GM12878 (cell line): ENCODE measurements at regions of chr2 and their contacts with region 1.

Region 1: DNA sequence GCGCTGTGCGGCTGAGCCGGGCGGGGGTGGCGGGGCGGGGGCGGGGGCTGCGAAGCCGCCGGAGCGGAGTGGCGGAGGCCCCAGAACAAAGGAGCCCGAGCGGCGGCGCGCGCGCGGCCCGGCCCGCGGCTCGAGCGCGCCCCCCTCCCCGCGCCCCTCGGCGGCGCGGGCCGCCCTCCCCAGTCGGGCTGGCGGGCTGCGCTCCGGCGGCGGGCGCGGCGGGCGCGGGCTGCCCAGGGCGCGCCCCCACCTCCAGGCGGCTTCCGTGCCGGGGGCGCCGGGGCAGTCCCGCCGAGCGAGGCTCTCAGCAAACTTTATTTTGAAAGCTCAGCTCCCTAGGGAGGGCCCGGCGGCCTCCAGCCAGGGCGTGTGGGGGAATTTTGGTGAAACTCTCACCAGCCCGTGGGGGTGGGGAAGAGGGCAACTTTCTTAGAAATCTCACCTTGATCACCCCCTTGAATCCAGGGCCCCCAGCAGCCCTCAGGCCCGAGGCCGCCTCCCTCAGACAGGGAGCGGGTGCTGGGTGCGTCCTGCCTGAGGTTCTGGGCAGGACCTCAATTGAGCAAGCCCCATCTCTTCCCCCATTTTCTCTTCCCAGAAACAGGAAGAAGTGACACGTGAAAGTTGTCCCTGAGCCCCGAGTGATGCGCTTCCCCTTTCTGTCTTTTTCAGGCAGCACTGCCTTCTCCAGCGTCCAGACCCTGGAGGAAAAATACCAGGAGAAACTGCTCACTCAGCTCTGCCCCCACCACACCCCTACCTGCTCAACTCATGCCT is 786 bp downstream of the TET3 start:
- DNase-seq: no peak
- ATAC-seq: peak; percentile 16
- H3K4me3 ChIP-seq: peak overlapping the region; percentile 96
- H3K27ac ChIP-seq: peak overlapping the region; percentile 89
- H3K4me1 ChIP-seq: peaks cover 12% of the 10 kb centered on the region
- H3K27me3 ChIP-seq: no peaks in the 10 kb centered on the region
- CTCF ChIP-seq: no peak
- EP300 ChIP-seq: peak; percentile 21 to 47; a peak in 1 of 4 replicates
- POLR2A ChIP-seq: no peak; the same call in 1 of the 2 replicates
- RAD21 ChIP-seq: no peak

Region 2: DNA sequence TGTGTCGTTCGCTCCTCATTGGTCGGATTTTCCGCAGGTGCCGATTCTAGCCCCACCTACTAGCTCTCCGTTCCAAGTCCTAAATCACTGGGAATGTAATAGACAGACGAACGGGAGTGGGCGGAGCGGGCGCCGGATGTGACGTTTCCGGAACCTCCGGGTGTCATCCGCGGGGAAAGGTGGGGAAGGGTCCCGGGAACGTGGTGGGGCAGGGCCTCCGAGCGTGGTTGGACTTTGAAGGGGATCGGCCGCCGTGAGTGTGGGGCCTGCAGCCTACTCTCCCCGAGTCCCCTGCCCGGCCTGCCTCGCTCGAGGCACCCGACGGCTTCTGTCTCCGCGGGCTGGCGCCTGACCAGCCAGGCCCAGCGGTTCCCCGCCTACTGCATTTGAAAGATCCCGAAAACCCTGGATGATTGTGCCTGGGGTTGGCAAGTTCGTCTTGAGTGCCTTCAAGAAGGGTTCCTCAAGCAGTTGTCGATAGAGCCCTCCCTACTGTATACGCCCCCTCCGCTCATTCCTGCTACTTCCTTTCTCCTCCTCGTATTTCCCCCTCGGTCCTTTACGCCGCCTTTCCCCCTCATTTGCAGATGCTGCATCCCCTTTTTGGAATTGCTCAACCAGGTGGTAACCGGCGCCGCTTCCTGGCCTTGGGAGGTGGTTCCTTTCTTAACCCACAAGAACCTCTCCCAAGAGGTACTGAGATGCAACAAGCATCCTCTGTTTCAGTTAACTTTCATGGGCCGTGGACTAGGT is 156.5 kb before region 1 on chr2 and contains the start of gene STAMBP:
- CTCF ChIA-PET with region 1: interaction called, 57 read pairs
- POLR2A ChIA-PET with region 1: interaction called, 6 read pairs
- RAD21 ChIA-PET with region 1: interaction called, 96 read pairs
- SMC1A ChIA-PET with region 1: interaction called, 46 read pairs
- in situ Hi-C with region 1: no loop called
- intact Hi-C with region 1: loop called (anchors 10 kb)
- DNase-seq: peak; percentile 87
- ATAC-seq: peak; percentile 89
- H3K4me3 ChIP-seq: peak within 1 kb of the TSS; percentile 96
- H3K27ac ChIP-seq: peak within 1 kb of the TSS; percentile 94
- H3K4me1 ChIP-seq: peaks cover 7% of the 10 kb centered on the region; the same call in 1 of the 2 replicates
- H3K27me3 ChIP-seq: no peaks in the 10 kb centered on the region
- CTCF ChIP-seq: no peak
- EP300 ChIP-seq: no peak
- POLR2A ChIP-seq: peak; percentile 80
- RAD21 ChIP-seq: no peak
- polyA plus RNA-seq, gene STAMBP: 67.3 to 72.2 TPM

Region 3: GRCh38 chr2:73920577-73921545 is 64.6 kb before region 1 on chr2:
- CTCF ChIA-PET with region 1: interaction called, 16 read pairs
- POLR2A ChIA-PET with region 1: no interaction called
- RAD21 ChIA-PET with region 1: interaction called, 9 read pairs
- SMC1A ChIA-PET with region 1: interaction called, 19 read pairs
- in situ Hi-C with region 1: no loop called
- intact Hi-C with region 1: loop called (anchors 2 kb)
- DNase-seq: no peak
- ATAC-seq: peak; percentile 76
- H3K4me3 ChIP-seq: no peak overlapping the region
- H3K27ac ChIP-seq: no peak overlapping the region
- H3K4me1 ChIP-seq: peaks cover 8% of the 10 kb centered on the region
- H3K27me3 ChIP-seq: no peaks in the 10 kb centered on the region
- CTCF ChIP-seq: peak; percentile 20 to 39 (median 33); a peak in 4 of 6 replicates
- EP300 ChIP-seq: no peak
- POLR2A ChIP-seq: no peak
- RAD21 ChIP-seq: peak; percentile 29; the same call in 1 of the 2 replicates

Region 4: DNA sequence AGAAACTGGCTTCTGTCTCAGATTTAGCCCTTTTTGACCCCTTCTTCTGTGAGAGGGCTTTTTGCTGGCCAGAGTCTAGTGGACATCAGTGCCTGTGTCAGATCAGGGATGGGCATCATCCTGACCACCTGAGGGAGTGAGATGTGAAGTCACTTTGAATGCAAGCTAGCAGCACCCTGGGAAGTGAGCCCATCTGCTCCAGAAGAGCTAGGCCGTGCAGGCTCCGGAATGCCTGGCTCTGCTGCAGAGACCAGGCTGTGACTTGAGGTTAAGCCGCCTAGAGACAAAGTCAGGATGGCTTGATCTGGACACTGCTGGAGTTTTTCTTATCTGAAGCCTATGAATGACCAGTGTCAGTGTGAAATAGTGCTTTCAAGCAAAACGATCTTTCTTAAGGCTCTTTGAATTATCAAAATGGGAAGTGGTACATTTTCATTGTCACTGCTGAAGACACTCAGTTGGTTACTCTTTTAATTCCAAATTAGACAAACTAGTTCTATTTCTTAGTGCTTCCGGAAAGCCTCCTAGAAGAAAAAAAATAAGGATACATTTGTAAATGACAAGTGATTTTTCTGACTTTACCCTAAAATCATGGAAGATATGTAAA is 38.0 kb before region 1 on chr2:
- CTCF ChIA-PET with region 1: no interaction called
- POLR2A ChIA-PET with region 1: interaction called, 4 read pairs
- RAD21 ChIA-PET with region 1: interaction called, 4 read pairs
- SMC1A ChIA-PET with region 1: interaction called, 15 read pairs
- in situ Hi-C with region 1: no loop called
- intact Hi-C with region 1: no loop called
- DNase-seq: no peak
- ATAC-seq: no peak
- H3K4me3 ChIP-seq: no peak overlapping the region
- H3K27ac ChIP-seq: no peak overlapping the region
- H3K4me1 ChIP-seq: peaks cover 4% of the 10 kb centered on the region; the same call in 1 of the 2 replicates
- H3K27me3 ChIP-seq: no peaks in the 10 kb centered on the region
- CTCF ChIP-seq: no peak
- EP300 ChIP-seq: no peak
- POLR2A ChIP-seq: no peak
- RAD21 ChIP-seq: no peak

Region 5: DNA sequence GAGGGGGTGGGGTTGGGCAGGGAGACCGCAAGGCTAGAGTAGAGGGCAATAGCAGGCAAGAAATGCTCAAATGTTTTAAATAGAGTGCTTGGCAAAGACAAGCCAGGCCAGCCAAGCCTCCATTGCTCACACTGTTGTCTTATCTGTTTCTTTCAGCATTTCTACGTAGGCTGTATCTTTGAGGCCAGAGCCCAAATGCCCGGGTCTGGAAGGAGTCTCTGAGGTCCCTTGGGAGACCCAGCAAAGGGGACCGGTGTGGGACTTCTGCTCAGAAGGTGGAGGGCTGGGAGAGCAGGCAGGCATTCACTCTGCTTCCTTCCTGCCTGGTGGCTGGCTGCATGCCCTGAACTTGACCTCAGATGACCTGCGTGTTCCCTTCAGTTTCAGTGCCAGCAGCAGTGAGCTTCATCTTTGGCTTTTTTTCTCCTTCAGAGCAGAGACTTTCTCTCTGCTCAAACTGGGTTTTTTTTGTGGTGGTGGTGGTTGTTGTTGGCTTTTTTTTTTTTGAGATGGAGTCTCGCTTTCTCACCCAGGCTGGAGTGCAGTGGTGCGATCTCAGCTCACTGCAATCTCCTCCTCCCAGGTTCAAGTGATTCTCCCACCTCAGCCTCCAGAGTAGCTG is 14.5 kb before region 1 on chr2:
- CTCF ChIA-PET with region 1: interaction called, 17 read pairs
- POLR2A ChIA-PET with region 1: interaction called, 25 read pairs
- RAD21 ChIA-PET with region 1: interaction called, 23 read pairs
- SMC1A ChIA-PET with region 1: interaction called, 31 read pairs
- in situ Hi-C with region 1: no loop called
- intact Hi-C with region 1: loop called (anchors 1 kb)
- DNase-seq: peak; percentile 88
- ATAC-seq: peak; percentile 84
- H3K4me3 ChIP-seq: peak overlapping the region; percentile 51; the same call in 1 of the 2 replicates
- H3K27ac ChIP-seq: peak overlapping the region; percentile 92
- H3K4me1 ChIP-seq: peaks cover 38% of the 10 kb centered on the region
- H3K27me3 ChIP-seq: no peaks in the 10 kb centered on the region
- CTCF ChIP-seq: no peak
- EP300 ChIP-seq: no peak
- POLR2A ChIP-seq: peak; percentile 53; the same call in 1 of the 2 replicates
- RAD21 ChIP-seq: no peak

Region 6: DNA sequence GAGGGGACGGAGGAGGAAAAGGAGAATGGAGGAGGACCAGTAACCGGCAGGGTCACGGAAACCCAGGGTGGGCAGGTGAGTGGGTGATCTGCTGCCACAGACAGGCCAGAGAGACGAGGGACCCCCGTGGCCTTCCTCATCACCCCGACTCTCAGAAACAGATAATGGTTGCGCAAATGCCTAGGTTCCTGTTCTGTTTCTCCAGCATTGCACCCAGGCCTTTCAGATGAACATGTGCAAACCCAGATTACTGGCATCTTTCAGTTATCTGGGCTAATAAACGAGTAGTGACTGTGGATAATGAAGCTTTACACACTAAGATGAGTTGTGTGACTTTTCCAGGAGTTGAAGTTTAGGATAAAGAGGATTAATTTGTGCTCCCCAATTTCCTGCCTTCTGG is 45.7 kb after region 1 on chr2:
- CTCF ChIA-PET with region 1: interaction called, 25 read pairs
- POLR2A ChIA-PET with region 1: interaction called, 34 read pairs
- RAD21 ChIA-PET with region 1: interaction called, 57 read pairs
- SMC1A ChIA-PET with region 1: interaction called, 14 read pairs
- in situ Hi-C with region 1: no loop called
- intact Hi-C with region 1: loop called (anchors 2 kb)
- DNase-seq: no peak
- ATAC-seq: no peak
- H3K4me3 ChIP-seq: peak overlapping the region; percentile 73
- H3K27ac ChIP-seq: peak overlapping the region; percentile 73
- H3K4me1 ChIP-seq: peaks cover 65% of the 10 kb centered on the region
- H3K27me3 ChIP-seq: no peaks in the 10 kb centered on the region
- CTCF ChIP-seq: no peak
- EP300 ChIP-seq: no peak
- POLR2A ChIP-seq: no peak
- RAD21 ChIP-seq: no peak

Region 7: GRCh38 chr2:74119912-74120825 is 134.7 kb after region 1 on chr2:
- CTCF ChIA-PET with region 1: interaction called, 7 read pairs
- POLR2A ChIA-PET with region 1: no interaction called
- RAD21 ChIA-PET with region 1: interaction called, 17 read pairs
- SMC1A ChIA-PET with region 1: interaction called, 3 read pairs
- in situ Hi-C with region 1: no loop called
- intact Hi-C with region 1: no loop called
- DNase-seq: peak; percentile 54
- ATAC-seq: peak; percentile 99
- H3K4me3 ChIP-seq: peak overlapping the region; percentile 95
- H3K27ac ChIP-seq: peak overlapping the region; percentile 96
- H3K4me1 ChIP-seq: peaks cover 3% of the 10 kb centered on the region; the same call in 1 of the 2 replicates
- H3K27me3 ChIP-seq: no peaks in the 10 kb centered on the region; a peak in 1 of 4 replicates
- CTCF ChIP-seq: peak; percentile 55 to 78 (median 70)
- EP300 ChIP-seq: no peak
- POLR2A ChIP-seq: peak; percentile 95
- RAD21 ChIP-seq: no peak

Region 8: DNA sequence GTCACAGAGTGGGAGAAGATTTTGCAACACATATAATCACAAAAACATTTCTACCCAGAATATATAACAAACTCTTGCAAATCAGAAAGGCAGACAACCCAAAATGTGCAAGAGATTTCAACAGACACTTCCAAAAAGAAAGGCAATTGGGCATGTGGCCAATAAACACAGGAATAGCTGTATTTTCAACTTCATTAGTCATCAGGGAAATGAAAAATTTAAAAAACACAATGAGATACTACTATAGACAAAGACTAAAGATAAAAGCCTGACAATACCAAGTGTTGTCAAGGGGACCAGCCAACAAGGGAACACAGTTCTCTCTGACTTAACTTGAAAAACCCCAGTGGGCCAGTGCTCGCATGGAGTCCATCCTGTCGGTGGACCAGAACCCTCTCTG is 253.4 kb after region 1 on chr2:
- CTCF ChIA-PET with region 1: no interaction called
- POLR2A ChIA-PET with region 1: no interaction called
- RAD21 ChIA-PET with region 1: no interaction called
- SMC1A ChIA-PET with region 1: no interaction called
- in situ Hi-C with region 1: no loop called
- intact Hi-C with region 1: no loop called
- DNase-seq: no peak
- ATAC-seq: no peak
- H3K4me3 ChIP-seq: no peak overlapping the region
- H3K27ac ChIP-seq: no peak overlapping the region
- H3K4me1 ChIP-seq: no peaks in the 10 kb centered on the region
- H3K27me3 ChIP-seq: no peaks in the 10 kb centered on the region
- CTCF ChIP-seq: no peak
- EP300 ChIP-seq: no peak
- POLR2A ChIP-seq: no peak
- RAD21 ChIP-seq: no peak